IMR-90 (cell line): ENCODE measurements at regions of chr11 and their contacts with region 1.

Region 1: GRCh38 chr11:102359372-102359771 is 12.4 kb downstream of the BIRC2 start:
- DNase-seq: no peak
- ATAC-seq: no peak
- H3K4me3 ChIP-seq: no peak overlapping the region
- H3K27ac ChIP-seq: no peak overlapping the region
- H3K4me1 ChIP-seq: peaks cover 6% of the 10 kb centered on the region
- H3K27me3 ChIP-seq: no peaks in the 10 kb centered on the region
- CTCF ChIP-seq: no peak
- POLR2A ChIP-seq: no peak
- RAD21 ChIP-seq: no peak

Region 2: GRCh38 chr11:102268329-102269193 is 90.8 kb before region 1 on chr11:
- CTCF ChIA-PET with region 1: no interaction called
- POLR2A ChIA-PET with region 1: no interaction called
- dilution Hi-C with region 1: no loop called
- in situ Hi-C with region 1: no loop called
- intact Hi-C with region 1: no loop called
- DNase-seq: peak; percentile 55
- ATAC-seq: peak; percentile 81
- H3K4me3 ChIP-seq: peak overlapping the region; percentile 44
- H3K27ac ChIP-seq: peak overlapping the region; percentile 15
- H3K4me1 ChIP-seq: peaks cover 8% of the 10 kb centered on the region
- H3K27me3 ChIP-seq: no peaks in the 10 kb centered on the region
- CTCF ChIP-seq: peak; percentile 24; the same call in 1 of the 2 replicates
- POLR2A ChIP-seq: no peak
- RAD21 ChIP-seq: peak; percentile 29; the same call in 1 of the 2 replicates

Region 3: DNA sequence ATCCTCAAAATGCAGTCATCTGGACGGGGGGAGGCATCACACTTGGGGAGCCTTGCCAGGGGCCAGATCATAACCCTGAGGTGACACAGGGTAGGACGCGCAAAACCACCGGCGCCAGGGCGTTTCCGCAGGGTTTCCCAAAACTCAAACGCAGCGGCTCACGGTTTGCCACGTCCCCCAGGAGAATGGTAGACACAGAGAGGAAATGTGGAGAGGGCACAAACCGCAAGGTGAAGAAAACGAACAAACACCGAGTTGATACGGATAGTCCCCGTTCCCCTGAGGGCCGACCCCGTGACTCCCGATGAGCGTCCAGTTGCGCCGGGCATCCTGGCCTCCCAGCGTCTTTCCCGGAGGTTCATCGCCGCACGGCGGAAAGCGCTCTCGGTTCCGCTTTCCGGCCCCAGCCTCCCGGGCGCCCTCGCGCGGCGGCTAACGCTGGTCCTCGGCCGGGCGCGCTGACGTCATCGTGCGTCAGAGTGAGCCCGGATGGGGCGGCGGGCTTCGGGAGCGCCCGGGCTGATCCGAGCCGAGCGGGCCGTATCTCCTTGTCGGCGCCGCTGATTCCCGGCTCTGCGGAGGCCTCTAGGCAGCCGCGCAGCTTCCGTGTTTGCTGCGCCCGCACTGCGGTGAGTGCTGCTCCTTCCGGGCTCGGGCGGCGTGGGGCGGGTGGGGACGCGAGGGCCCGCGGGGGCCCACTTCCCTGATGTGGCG is 12.5 kb before region 1 on chr11 and contains the start of gene BIRC2:
- CTCF ChIA-PET with region 1: no interaction called
- POLR2A ChIA-PET with region 1: no interaction called
- dilution Hi-C with region 1: no loop called
- in situ Hi-C with region 1: no loop called
- intact Hi-C with region 1: no loop called
- DNase-seq: peak; percentile 89
- ATAC-seq: peak; percentile 91
- H3K4me3 ChIP-seq: peak within 1 kb of the TSS; percentile 81
- H3K27ac ChIP-seq: peak within 1 kb of the TSS; percentile 95
- H3K4me1 ChIP-seq: no peaks in the 10 kb centered on the region; the same call in 1 of the 2 replicates
- H3K27me3 ChIP-seq: no peaks in the 10 kb centered on the region
- CTCF ChIP-seq: peak; percentile 94
- POLR2A ChIP-seq: peak; percentile 84
- RAD21 ChIP-seq: peak; percentile 36
- total RNA-seq, gene BIRC2: 112 and 204 TPM in 2 replicates

Region 4: GRCh38 chr11:102407901-102408300 is 48.5 kb after region 1 on chr11:
- CTCF ChIA-PET with region 1: no interaction called
- POLR2A ChIA-PET with region 1: no interaction called
- dilution Hi-C with region 1: no loop called
- in situ Hi-C with region 1: no loop called
- intact Hi-C with region 1: loop called (anchors 10 kb)
- DNase-seq: no peak
- ATAC-seq: no peak
- H3K4me3 ChIP-seq: no peak overlapping the region
- H3K27ac ChIP-seq: no peak overlapping the region
- H3K4me1 ChIP-seq: peaks cover 9% of the 10 kb centered on the region
- H3K27me3 ChIP-seq: no peaks in the 10 kb centered on the region
- CTCF ChIP-seq: no peak
- POLR2A ChIP-seq: no peak
- RAD21 ChIP-seq: no peak

Region 5: DNA sequence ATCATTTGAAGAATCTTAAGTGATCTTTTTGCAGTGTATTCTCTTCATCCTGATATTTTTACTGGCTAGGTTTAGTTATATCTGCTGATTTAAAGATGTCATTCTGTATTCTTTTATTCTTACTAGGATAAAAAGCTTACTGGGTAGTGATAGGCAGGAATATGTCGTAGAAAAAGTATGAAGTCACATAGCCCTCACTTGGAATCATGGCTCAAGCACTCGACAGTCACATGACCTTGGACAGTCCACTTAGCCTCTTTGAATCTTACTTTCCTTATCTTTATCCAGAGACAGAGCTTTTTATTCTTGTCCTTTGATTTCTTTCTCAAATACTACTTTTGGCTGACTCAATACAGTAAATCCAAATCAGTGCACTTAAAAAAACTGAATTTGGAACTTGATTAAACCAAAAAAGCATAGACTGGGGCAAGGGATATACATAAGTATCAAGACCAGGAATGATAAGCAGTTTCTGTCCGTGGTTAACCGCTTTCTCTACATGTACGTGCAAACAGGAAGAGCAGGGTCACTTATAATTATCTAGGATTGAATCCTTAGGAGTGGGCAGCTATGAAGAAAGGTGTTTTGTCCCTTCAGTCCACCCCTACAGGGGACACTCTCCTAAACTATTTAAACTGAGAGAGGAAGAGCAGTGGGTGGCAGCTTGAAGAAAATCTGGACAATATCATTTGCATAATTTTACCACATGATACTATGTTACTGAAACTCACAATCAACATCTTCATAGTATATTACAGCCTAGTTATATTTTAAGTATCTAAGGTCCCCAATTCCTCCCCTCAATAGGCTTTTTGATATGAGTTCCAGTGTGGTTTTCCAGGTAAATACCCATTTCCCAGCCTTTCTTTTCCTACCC is 163.2 kb after region 1 on chr11:
- CTCF ChIA-PET with region 1: no interaction called
- POLR2A ChIA-PET with region 1: no interaction called
- dilution Hi-C with region 1: no loop called
- in situ Hi-C with region 1: no loop called
- intact Hi-C with region 1: no loop called
- DNase-seq: no peak
- ATAC-seq: no peak
- H3K4me3 ChIP-seq: no peak overlapping the region
- H3K27ac ChIP-seq: no peak overlapping the region
- H3K4me1 ChIP-seq: no peaks in the 10 kb centered on the region
- H3K27me3 ChIP-seq: no peaks in the 10 kb centered on the region; the same call in 1 of the 2 replicates
- CTCF ChIP-seq: no peak
- POLR2A ChIP-seq: no peak
- RAD21 ChIP-seq: no peak